Tibial artery (tissue), 4 donors: ENCODE measurements at regions of chr15 and their contacts with region 1.

Region 1: GRCh38 chr15:99565299-99566156 is at the start of gene MEF2A:
- DNase-seq: peak; percentile 92 to 97
- H3K4me3 ChIP-seq: peak within 1 kb of the TSS; percentile 91 to 97
- H3K27ac ChIP-seq: peak within 1 kb of the TSS; percentile 99
- H3K4me1 ChIP-seq: peaks cover 0 to 42% (median 16%) of the 10 kb centered on the region in 4 donors
- H3K27me3 ChIP-seq: no peaks in the 10 kb centered on the region
- CTCF ChIP-seq: peak in 1 of 2 experiments; percentile 3

Region 2: GRCh38 chr15:99433034-99433756 is 132.3 kb before region 1 on chr15:
- intact Hi-C with region 1: loop called (anchors 10 kb)
- DNase-seq: peak; percentile 15 to 62
- H3K4me3 ChIP-seq: no peak overlapping the region
- H3K27ac ChIP-seq: no peak overlapping the region
- H3K4me1 ChIP-seq: peaks cover 0 to 42% (median 24%) of the 10 kb centered on the region in 4 donors
- H3K27me3 ChIP-seq: no peaks in the 10 kb centered on the region
- CTCF ChIP-seq: no peak

Region 3: GRCh38 chr15:99605490-99605931 is 40.0 kb after region 1 on chr15:
- intact Hi-C with region 1: no loop called
- DNase-seq: no peak
- H3K4me3 ChIP-seq: no peak overlapping the region
- H3K27ac ChIP-seq: no peak overlapping the region
- H3K4me1 ChIP-seq: peaks cover 0 to 57% (median 5%) of the 10 kb centered on the region in 4 donors
- H3K27me3 ChIP-seq: no peaks in the 10 kb centered on the region
- CTCF ChIP-seq: no peak

Region 4: GRCh38 chr15:99704444-99704838 is 138.9 kb after region 1 on chr15:
- intact Hi-C with region 1: loop called (anchors 5 kb)
- DNase-seq: no peak
- H3K4me3 ChIP-seq: no peak overlapping the region
- H3K27ac ChIP-seq: peak overlapping the region; percentile 73 to 77
- H3K4me1 ChIP-seq: peaks cover 0 to 49% (median 24%) of the 10 kb centered on the region in 4 donors
- H3K27me3 ChIP-seq: no peaks in the 10 kb centered on the region
- CTCF ChIP-seq: peak; percentile 74 to 78